ENCODE measurements at regions of chr2 and their contacts with region 1.

Region 1: GRCh38 chr2:47339745-47340541 is 63.0 kb upstream of the MSH2 start:
- DNase-seq: no peak
- H3K4me3 Mint-ChIP-seq: no peak overlapping the region
- H3K27ac Mint-ChIP-seq: no peak overlapping the region
- H3K4me1 Mint-ChIP-seq: no peaks in the 10 kb centered on the region
- H3K27me3 Mint-ChIP-seq: peaks cover 41% of the 10 kb centered on the region

Region 2: DNA sequence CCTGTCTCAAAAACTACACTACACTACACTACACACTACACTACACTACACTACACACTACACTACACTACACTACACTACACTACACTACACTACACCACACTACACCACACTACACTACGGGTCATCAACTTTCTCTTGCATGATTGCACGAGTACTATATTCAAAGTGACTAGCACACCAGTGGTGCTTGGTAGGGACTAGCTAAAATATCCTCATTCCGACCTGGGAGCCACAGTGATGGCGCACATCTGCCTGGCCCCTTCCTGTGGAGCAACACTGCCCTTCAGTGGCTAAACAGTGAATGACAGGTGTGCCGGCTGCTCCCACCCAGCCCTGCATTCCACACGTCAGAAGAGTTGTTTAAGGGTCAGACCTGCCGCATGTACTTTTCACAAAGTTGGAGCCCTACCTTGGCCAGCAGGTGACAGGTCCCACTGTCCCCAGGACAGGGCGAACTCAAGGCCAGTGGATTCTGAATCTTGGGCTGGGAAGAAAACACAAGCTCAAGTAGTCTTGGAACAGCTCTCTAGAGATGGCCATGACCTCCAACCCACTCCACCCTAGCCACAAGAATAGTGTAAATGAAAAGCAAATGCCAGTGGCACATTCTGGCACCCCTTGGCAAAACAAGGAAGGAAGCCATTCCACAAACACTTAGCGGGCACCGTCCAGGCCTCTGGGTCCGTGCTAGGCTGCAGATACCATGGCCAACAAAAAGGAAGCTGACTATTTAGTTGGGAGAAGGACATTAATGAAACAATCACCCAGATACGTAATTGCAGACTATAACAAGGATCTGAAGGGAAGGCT is 16.7 kb before region 1 on chr2:
- CTCF ChIA-PET with region 1: interaction called, 32 read pairs
- DNase-seq: peak; percentile 77
- H3K4me3 Mint-ChIP-seq: no peak overlapping the region
- H3K27ac Mint-ChIP-seq: no peak overlapping the region
- H3K4me1 Mint-ChIP-seq: no peaks in the 10 kb centered on the region
- H3K27me3 Mint-ChIP-seq: peaks cover 30% of the 10 kb centered on the region

Region 3: DNA sequence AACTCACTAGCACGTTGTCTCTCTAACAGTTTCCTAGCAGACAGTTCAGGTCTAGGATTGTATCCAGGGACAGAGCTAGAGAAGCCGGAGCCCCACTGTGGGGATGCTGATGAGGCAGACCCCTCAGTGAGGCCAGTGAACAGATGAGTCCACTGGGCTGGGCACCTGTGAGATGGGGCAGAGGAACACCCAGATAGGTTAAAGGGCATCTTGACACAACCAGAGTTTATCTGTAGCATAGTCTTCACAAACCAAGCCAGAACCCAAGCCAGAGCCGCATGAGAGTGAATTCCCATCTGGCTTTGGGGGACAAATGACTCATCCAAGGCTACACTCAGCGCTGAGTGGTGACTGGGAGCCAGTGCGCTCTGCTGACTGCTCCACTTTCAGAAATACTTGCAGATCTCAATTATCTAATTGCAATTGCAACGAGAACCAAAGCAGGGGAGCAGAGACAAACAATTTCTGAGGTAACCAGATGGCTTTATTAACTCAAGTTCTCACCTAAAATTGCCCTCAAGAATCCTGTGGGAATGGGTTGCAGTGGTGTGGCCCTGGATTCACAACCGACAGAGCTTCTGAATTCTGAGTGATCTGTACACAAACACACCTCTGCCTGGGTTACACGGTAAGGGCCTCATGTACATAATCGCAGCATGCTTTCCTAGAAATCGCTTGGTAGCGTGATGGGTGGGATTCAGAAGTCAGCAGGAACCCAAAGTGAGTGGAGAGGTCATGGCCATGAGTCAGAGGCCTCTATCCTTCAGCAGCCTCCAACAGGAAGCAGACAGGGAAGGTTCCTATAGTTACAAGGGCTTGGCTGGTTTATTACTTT is 14.3 kb after region 1 on chr2:
- CTCF ChIA-PET with region 1: no interaction called
- DNase-seq: no peak
- H3K4me3 Mint-ChIP-seq: no peak overlapping the region
- H3K27ac Mint-ChIP-seq: no peak overlapping the region
- H3K4me1 Mint-ChIP-seq: no peaks in the 10 kb centered on the region
- H3K27me3 Mint-ChIP-seq: peaks cover 4% of the 10 kb centered on the region

Region 4: DNA sequence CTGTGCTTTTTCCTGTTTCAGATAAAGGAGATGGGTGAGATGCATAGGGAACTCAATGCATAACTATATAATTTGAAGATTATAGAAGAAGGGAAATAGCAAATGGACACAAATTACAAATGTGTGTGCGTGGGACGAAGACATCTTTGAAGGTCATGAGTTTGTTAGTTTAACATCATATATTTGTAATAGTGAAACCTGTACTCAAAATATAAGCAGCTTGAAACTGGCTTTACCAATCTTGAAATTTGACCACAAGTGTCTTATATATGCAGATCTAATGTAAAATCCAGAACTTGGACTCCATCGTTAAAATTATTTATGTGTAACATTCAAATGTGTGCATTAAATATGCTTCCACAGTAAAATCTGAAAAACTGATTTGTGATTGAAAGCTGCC is 46.6 kb after region 1 on chr2:
- CTCF ChIA-PET with region 1: interaction called, 73 read pairs
- DNase-seq: no peak
- H3K4me3 Mint-ChIP-seq: no peak overlapping the region
- H3K27ac Mint-ChIP-seq: no peak overlapping the region
- H3K4me1 Mint-ChIP-seq: no peaks in the 10 kb centered on the region
- H3K27me3 Mint-ChIP-seq: peaks cover 31% of the 10 kb centered on the region

Region 5: GRCh38 chr2:47429795-47430194 is 89.9 kb after region 1 on chr2:
- CTCF ChIA-PET with region 1: no interaction called
- DNase-seq: no peak
- H3K4me3 Mint-ChIP-seq: no peak overlapping the region
- H3K27ac Mint-ChIP-seq: no peak overlapping the region
- H3K4me1 Mint-ChIP-seq: no peaks in the 10 kb centered on the region
- H3K27me3 Mint-ChIP-seq: no peaks in the 10 kb centered on the region

Measured in activated naive CD4-positive, alpha-beta T cell treated with anti-CD3 and anti-CD28 coated beads, Interleukin-2, amount 10 ng/mL, durations not matched to agents 7 days and 5 days (primary cell).